B cell (primary cell): ENCODE measurements at regions of chr12 and their contacts with region 1.

Region 1: DNA sequence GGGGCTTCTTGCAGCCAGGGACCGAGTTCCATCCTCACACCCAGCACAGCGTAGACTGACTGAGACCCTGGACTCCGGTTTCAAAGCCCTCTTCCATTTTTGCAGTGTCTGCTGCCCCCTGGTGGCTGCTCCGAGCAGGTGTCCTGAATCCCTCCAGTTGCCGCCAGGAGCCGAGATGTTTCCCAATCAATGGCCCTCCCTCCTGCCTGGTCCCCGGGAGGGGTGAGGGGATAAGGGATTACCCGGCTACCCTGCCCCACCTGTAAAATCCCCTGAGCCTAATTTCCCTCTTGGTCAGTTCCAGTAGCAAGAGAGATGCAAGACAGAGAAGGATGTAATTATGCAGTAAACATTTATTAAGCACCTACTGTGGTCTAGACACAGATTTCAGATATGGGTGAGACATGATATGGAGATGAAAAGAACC is 55.0 kb downstream of the PHETA1 start:
- DNase-seq: peak; percentile 79
- ATAC-seq: peak; percentile 62
- H3K4me3 ChIP-seq: no peak overlapping the region
- H3K4me3 Mint-ChIP-seq: no peak overlapping the region
- H3K27ac ChIP-seq: no peak overlapping the region
- H3K27ac Mint-ChIP-seq: peak overlapping the region; percentile 3
- H3K4me1 ChIP-seq: peaks cover 5% of the 10 kb centered on the region in 2 donors
- H3K4me1 Mint-ChIP-seq: peaks cover 8% of the 10 kb centered on the region
- H3K27me3 ChIP-seq: peaks cover 0 to 10% (median 1%) of the 10 kb centered on the region in 4 experiments
- H3K27me3 Mint-ChIP-seq: peaks cover 16% of the 10 kb centered on the region
- CTCF ChIP-seq: peak; percentile 97

Region 2: GRCh38 chr12:110937104-110937641 is 376.7 kb before region 1 on chr12:
- CTCF ChIA-PET with region 1: interaction called, 3 read pairs
- POLR2A ChIA-PET with region 1: no interaction called
- intact Hi-C with region 1: loop called (anchors 1 kb)
- DNase-seq: peak; percentile 78
- ATAC-seq: peak; percentile 51
- H3K4me3 ChIP-seq: peak overlapping the region in 1 of 5 experiments; percentile 26
- H3K4me3 Mint-ChIP-seq: peak overlapping the region; percentile 19
- H3K27ac ChIP-seq: no peak overlapping the region
- H3K27ac Mint-ChIP-seq: no peak overlapping the region
- H3K4me1 ChIP-seq: peaks cover 3 to 8% of the 10 kb centered on the region in 2 donors
- H3K4me1 Mint-ChIP-seq: peaks cover 6% of the 10 kb centered on the region
- H3K27me3 ChIP-seq: peaks cover 0 to 18% (median 0%) of the 10 kb centered on the region in 4 experiments
- H3K27me3 Mint-ChIP-seq: peaks cover 30% of the 10 kb centered on the region
- CTCF ChIP-seq: peak; percentile 100

Region 3: GRCh38 chr12:111024205-111024801 is 289.5 kb before region 1 on chr12:
- CTCF ChIA-PET with region 1: no interaction called
- POLR2A ChIA-PET with region 1: no interaction called
- intact Hi-C with region 1: loop called (anchors 5 kb)
- DNase-seq: peak; percentile 44
- ATAC-seq: peak; percentile 33
- H3K4me3 ChIP-seq: no peak overlapping the region
- H3K4me3 Mint-ChIP-seq: no peak overlapping the region
- H3K27ac ChIP-seq: no peak overlapping the region
- H3K27ac Mint-ChIP-seq: no peak overlapping the region
- H3K4me1 ChIP-seq: no peaks in the 10 kb centered on the region
- H3K4me1 Mint-ChIP-seq: no peaks in the 10 kb centered on the region
- H3K27me3 ChIP-seq: peaks cover 0 to 17% (median 2%) of the 10 kb centered on the region in 4 experiments
- H3K27me3 Mint-ChIP-seq: peaks cover 62% of the 10 kb centered on the region
- CTCF ChIP-seq: peak; percentile 53

Region 4: GRCh38 chr12:113271853-113272561 is 1958.2 kb after region 1 on chr12:
- CTCF ChIA-PET with region 1: no interaction called
- POLR2A ChIA-PET with region 1: no interaction called
- intact Hi-C with region 1: no loop called
- DNase-seq: no peak
- ATAC-seq: no peak
- H3K4me3 ChIP-seq: no peak overlapping the region
- H3K4me3 Mint-ChIP-seq: no peak overlapping the region
- H3K27ac ChIP-seq: no peak overlapping the region
- H3K27ac Mint-ChIP-seq: no peak overlapping the region
- H3K4me1 ChIP-seq: no peaks in the 10 kb centered on the region
- H3K4me1 Mint-ChIP-seq: no peaks in the 10 kb centered on the region
- H3K27me3 ChIP-seq: no peaks in the 10 kb centered on the region
- H3K27me3 Mint-ChIP-seq: no peaks in the 10 kb centered on the region
- CTCF ChIP-seq: no peak